ENCODE measurements at regions of chr9 and their contacts with region 1.

Region 1: DNA sequence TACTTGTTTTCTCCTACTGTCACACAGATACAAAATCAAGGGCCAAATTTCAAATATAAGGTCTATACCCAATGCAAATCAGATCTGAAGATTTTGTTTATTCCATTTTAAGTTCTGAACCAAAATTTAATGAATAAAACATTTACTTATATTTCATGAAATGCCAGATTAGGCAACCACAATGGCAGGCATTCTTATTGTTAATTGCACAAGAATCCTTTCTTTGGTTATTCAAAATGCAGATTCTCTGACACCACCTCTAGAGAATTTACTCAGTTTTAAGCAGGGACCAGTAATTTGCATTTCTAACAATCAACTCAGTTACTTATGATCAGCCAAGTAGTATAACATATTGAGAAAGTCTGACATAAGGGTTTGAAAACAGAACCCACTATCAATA is 972.4 kb upstream of the ACO1 start:
- DNase-seq: no peak
- H3K4me3 ChIP-seq: no peak overlapping the region
- H3K27ac ChIP-seq: no peak overlapping the region
- H3K4me1 ChIP-seq: no peaks in the 10 kb centered on the region
- H3K27me3 ChIP-seq: no peaks in the 10 kb centered on the region
- CTCF ChIP-seq: no peak
- POLR2A ChIP-seq: no peak

Region 2: DNA sequence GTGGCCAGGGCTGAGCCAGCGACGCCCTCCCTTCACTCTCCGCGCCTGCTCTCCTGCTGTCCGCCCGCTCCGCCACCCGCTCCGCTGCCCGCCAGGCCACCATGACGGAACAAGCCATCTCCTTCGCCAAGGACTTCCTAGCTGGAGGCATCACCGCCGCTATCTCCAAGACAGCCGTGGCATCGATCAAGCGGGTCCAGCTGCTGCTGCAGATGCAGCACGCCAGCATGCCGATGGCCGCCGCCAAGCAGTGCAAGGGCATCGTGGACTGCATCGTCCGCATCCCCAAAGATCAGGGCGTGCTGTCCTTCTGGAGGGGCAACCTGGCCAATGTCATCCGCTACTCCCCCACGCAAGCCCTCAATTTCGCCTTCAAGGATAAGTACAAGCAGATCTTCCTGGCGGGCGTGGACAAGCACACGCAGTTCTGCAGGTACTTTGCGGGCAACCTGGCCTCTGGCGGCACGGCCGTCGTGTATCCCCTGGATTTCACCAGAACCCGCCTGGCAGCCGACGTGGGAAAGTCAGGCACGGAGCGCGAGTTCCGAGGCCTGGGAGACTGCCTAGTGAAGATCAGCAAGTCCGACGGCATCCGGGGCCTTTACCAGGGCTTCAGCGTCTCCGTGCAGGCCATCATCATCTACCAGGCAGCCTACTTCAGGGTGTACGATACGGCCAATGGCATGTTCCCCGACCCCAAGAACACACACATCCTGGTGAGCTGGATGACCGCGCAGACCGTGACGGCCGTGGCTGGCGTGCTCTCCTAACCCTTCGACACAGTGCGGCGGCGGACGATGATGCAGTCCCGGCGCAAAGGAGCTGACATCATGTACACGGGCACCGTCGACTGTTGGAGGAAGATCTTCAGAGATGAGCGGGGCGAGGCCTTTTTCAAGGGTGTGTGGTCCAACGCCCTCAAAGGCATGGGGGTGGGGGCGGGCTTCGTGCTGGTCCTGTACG is 158.0 kb before region 1 on chr9:
- CTCF ChIA-PET with region 1: no interaction called
- POLR2A ChIA-PET with region 1: no interaction called
- dilution Hi-C with region 1: no loop called
- intact Hi-C with region 1: no loop called
- DNase-seq: no peak
- H3K4me3 ChIP-seq: no peak overlapping the region
- H3K27ac ChIP-seq: no peak overlapping the region
- H3K4me1 ChIP-seq: no peaks in the 10 kb centered on the region
- H3K27me3 ChIP-seq: no peaks in the 10 kb centered on the region
- CTCF ChIP-seq: no peak
- POLR2A ChIP-seq: no peak

Region 3: GRCh38 chr9:31467086-31467485 is 55.0 kb after region 1 on chr9:
- CTCF ChIA-PET with region 1: no interaction called
- POLR2A ChIA-PET with region 1: no interaction called
- dilution Hi-C with region 1: no loop called
- intact Hi-C with region 1: loop called (anchors 5 kb)
- DNase-seq: no peak
- H3K4me3 ChIP-seq: no peak overlapping the region
- H3K27ac ChIP-seq: no peak overlapping the region
- H3K4me1 ChIP-seq: no peaks in the 10 kb centered on the region
- H3K27me3 ChIP-seq: no peaks in the 10 kb centered on the region
- CTCF ChIP-seq: no peak
- POLR2A ChIP-seq: no peak

Region 4: DNA sequence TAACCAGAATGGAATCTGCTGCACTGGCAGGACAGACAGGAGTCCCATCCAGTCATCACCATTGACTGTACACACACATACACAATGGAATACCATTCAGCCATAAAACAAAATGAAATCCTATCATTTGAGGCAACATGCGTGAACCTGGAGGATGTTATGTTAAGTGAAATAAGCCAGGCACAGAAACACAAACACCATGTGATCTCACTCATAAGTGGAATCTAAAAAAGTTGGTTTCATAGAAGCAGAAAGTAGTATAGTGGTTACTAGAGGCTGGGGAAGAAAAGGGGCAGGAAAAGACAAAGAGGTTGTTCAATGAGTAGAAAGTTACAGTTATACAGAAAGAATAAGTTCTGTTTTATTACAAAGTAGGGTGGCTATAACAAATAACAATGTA is 88.3 kb after region 1 on chr9:
- CTCF ChIA-PET with region 1: no interaction called
- POLR2A ChIA-PET with region 1: no interaction called
- dilution Hi-C with region 1: no loop called
- intact Hi-C with region 1: no loop called
- DNase-seq: no peak
- H3K4me3 ChIP-seq: no peak overlapping the region
- H3K27ac ChIP-seq: no peak overlapping the region
- H3K4me1 ChIP-seq: no peaks in the 10 kb centered on the region
- H3K27me3 ChIP-seq: no peaks in the 10 kb centered on the region
- CTCF ChIP-seq: no peak
- POLR2A ChIP-seq: no peak